Aorta (tissue), 5 donors: ENCODE measurements at regions of chr11 and their contacts with region 1.

Region 1: DNA sequence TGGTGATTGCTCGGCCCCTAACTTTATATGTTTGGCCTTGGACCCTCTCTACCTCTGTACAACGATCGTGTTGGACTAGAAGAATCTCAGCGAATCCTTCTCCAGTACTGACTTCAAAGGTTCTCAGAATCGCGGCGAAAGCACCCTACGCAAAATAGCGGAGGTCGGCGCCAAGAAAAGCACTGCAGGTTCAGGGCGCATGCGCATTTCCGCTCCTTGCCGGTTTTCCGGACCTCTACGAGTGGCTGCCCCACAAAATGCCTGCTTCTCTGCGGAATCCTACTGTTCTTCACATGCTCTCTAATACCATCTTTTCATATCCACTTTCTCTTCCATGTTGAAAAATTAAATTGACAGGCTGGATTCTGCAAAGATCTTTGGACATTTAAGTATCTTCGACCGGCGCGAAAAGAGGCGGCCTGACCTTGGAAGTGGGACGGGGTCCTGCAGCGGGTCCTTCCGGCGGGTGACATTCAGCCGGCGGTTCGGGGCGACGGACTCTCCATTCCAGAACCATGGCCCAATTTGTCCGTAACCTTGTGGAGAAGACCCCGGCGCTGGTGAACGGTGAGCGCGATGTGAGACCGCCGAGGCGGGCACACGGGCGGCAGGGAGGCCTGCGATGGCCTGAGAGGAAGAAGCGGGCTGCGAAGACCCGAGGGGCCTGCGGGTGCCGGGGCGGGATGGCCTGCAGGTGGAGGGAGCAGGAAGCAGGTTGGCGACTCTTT is at the start of gene ATP5MG:
- DNase-seq: peak; percentile 94 to 97
- ATAC-seq: peak; percentile 95
- H3K4me3 ChIP-seq: peak within 1 kb of the TSS; percentile 65 to 93
- H3K27ac ChIP-seq: peak within 1 kb of the TSS in 1 of 2 donors; percentile 73
- H3K4me1 ChIP-seq: no peaks in the 10 kb centered on the region
- H3K27me3 ChIP-seq: no peaks in the 10 kb centered on the region
- total RNA-seq, gene ATP5MG: 98.4 to 107 TPM

Region 2: GRCh38 chr11:118435893-118436624 is 34.7 kb after region 1 on chr11 and contains the start of gene KMT2A:
- intact Hi-C with region 1: loop called (anchors 1 to 5 kb)
- DNase-seq: peak; percentile 99
- ATAC-seq: peak; percentile 97
- H3K4me3 ChIP-seq: peak within 1 kb of the TSS; percentile 84 to 90
- H3K27ac ChIP-seq: peak within 1 kb of the TSS; percentile 60 to 91
- H3K4me1 ChIP-seq: peaks cover 0 to 6% of the 10 kb centered on the region in 2 donors
- H3K27me3 ChIP-seq: no peaks in the 10 kb centered on the region
- total RNA-seq, gene KMT2A: 105 to 114 TPM

Region 3: DNA sequence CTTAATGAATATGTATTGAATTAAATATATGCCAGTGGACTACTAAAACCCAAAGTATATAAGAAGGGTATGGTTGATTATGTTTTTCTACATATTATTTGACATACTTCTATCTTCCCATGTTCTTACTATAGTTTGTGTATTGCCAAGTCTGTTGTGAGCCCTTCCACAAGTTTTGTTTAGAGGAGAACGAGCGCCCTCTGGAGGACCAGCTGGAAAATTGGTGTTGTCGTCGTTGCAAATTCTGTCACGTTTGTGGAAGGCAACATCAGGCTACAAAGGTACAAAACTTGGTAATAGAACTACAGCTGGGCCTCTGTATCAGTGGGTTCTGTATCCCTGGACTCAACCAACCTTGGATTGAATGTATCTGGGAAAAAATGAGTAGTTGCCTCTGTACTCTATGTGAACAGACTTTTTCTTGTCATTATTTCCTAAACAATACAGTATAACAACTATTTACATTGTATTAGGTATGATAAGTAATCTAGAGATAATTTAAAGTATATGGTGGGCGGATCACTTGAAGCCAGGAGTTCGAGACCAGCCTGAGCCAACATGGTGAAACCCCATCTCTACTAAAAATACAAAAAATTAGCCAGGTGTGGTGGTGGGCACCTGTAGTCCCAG is 87.3 kb after region 1 on chr11:
- intact Hi-C with region 1: loop called (anchors 5 kb)
- DNase-seq: peak; percentile 68 to 85
- ATAC-seq: peak; percentile 87
- H3K4me3 ChIP-seq: no peak overlapping the region
- H3K27ac ChIP-seq: no peak overlapping the region
- H3K4me1 ChIP-seq: no peaks in the 10 kb centered on the region
- H3K27me3 ChIP-seq: no peaks in the 10 kb centered on the region